GM23248 (cell line): ENCODE measurements at regions of chr18 and their contacts with region 1.

Region 1: GRCh38 chr18:59994357-59994756 is 94.6 kb downstream of the PMAIP1 start:
- DNase-seq: peak; percentile 14
- H3K4me3 ChIP-seq: no peak overlapping the region
- H3K27ac ChIP-seq: no peak overlapping the region
- H3K4me1 ChIP-seq: 0 out of 2 replicates have a peak, but pooled peaks cover 4% of the 10 kb centered on the region
- H3K27me3 ChIP-seq: no peaks in the 10 kb centered on the region

Region 2: GRCh38 chr18:60123031-60123430 is 128.7 kb after region 1 on chr18:
- in situ Hi-C with region 1: no loop called
- DNase-seq: no peak
- H3K4me3 ChIP-seq: no peak overlapping the region
- H3K27ac ChIP-seq: no peak overlapping the region
- H3K4me1 ChIP-seq: no peaks in the 10 kb centered on the region
- H3K27me3 ChIP-seq: no peaks in the 10 kb centered on the region

Region 3: GRCh38 chr18:60246606-60247005 is 252.2 kb after region 1 on chr18:
- in situ Hi-C with region 1: no loop called
- DNase-seq: no peak
- H3K4me3 ChIP-seq: no peak overlapping the region
- H3K27ac ChIP-seq: no peak overlapping the region
- H3K4me1 ChIP-seq: no peaks in the 10 kb centered on the region
- H3K27me3 ChIP-seq: 0 out of 2 replicates have a peak, but pooled peaks cover 4% of the 10 kb centered on the region

Region 4: DNA sequence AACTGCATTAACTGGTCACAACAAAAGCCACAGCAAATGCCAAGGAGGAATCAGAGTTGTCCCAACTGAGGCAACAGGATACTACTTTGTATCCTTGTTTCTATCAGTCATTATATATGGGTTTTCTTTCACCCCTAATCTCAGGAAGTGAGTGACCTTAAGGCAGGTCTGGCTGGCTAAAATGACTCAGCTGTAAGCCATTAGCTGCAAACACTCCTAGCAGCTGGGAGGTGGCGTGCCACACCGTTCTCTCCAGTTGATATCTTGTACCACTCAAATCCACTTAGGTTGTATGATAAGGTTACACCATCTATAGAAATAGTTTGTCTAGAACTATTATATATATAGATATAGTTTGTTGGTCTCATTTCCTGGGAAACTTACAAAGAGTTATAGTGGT is 549.3 kb after region 1 on chr18:
- in situ Hi-C with region 1: loop called (anchors 5 kb)
- DNase-seq: no peak
- H3K4me3 ChIP-seq: no peak overlapping the region
- H3K27ac ChIP-seq: no peak overlapping the region
- H3K4me1 ChIP-seq: no peaks in the 10 kb centered on the region
- H3K27me3 ChIP-seq: no peaks in the 10 kb centered on the region